Activated naive CD4-positive, alpha-beta T cell treated with anti-CD3 and anti-CD28 coated beads for 36 hours (primary cell): ENCODE measurements at regions of chr14 and their contacts with region 1.

Region 1: GRCh38 chr14:106185837-106186233 is 659.5 kb downstream of the TMEM121 start:
- DNase-seq: peak; percentile 88
- H3K4me3 Mint-ChIP-seq: no peak overlapping the region
- H3K27ac Mint-ChIP-seq: no peak overlapping the region
- H3K4me1 Mint-ChIP-seq: peaks cover 31% of the 10 kb centered on the region
- H3K27me3 Mint-ChIP-seq: no peaks in the 10 kb centered on the region

Region 2: DNA sequence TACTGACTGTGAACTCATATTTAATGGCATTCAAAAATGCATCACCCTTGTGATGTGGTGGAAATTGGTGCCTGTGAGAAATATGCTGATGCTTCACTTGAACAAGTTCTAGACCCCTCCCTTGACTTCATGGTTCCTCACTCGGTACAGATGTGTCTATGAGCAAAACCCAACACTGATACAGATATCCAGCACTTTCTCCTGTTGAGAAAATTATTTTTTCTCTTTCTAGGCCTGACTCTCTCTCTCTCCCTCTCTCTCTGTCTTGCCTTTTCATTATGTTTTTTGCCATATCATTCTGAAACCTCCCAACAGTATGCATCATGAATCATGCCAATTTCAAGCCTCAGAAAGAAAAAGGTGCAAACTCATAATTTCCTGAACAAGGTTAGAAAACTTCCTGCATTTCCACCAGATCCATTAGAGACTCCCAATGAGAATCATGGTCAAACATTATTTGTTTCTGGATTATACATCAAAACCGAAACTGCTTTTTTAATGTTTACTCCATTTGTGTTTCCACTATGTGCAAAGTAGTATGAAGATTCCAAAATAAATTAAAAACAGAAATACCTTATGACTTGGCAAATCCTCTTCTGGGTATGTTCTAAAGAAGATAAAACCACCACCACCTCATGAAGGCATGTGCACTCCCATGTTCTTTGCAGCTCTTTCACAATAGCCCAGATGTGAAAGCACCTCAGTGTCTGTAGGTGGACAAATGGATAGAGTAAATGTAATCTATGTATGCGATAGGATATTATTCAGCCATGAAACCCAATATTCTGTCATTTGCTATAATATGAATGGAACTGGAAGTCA is 115.8 kb before region 1 on chr14:
- CTCF ChIA-PET with region 1: no interaction called
- intact Hi-C with region 1: loop called (anchors 5 kb)
- DNase-seq: peak; percentile 28
- H3K4me3 Mint-ChIP-seq: no peak overlapping the region
- H3K27ac Mint-ChIP-seq: peak overlapping the region; percentile 59
- H3K4me1 Mint-ChIP-seq: peaks cover 18% of the 10 kb centered on the region
- H3K27me3 Mint-ChIP-seq: peaks cover 9% of the 10 kb centered on the region

Region 3: GRCh38 chr14:106115401-106115800 is 70.4 kb before region 1 on chr14:
- CTCF ChIA-PET with region 1: interaction called, 4 read pairs
- intact Hi-C with region 1: loop called (anchors 5 kb)
- DNase-seq: no peak
- H3K4me3 Mint-ChIP-seq: no peak overlapping the region
- H3K27ac Mint-ChIP-seq: peak overlapping the region; percentile 29
- H3K4me1 Mint-ChIP-seq: peaks cover 34% of the 10 kb centered on the region
- H3K27me3 Mint-ChIP-seq: peaks cover 5% of the 10 kb centered on the region

Region 4: GRCh38 chr14:106174206-106174605 is 11.6 kb before region 1 on chr14:
- CTCF ChIA-PET with region 1: interaction called, 27 read pairs
- intact Hi-C with region 1: loop called (anchors 1 kb)
- DNase-seq: peak; percentile 78
- H3K4me3 Mint-ChIP-seq: peak overlapping the region; percentile 25
- H3K27ac Mint-ChIP-seq: no peak overlapping the region
- H3K4me1 Mint-ChIP-seq: peaks cover 54% of the 10 kb centered on the region
- H3K27me3 Mint-ChIP-seq: no peaks in the 10 kb centered on the region

Region 5: GRCh38 chr14:106200541-106201315 is 14.9 kb after region 1 on chr14:
- CTCF ChIA-PET with region 1: interaction called, 20 read pairs
- intact Hi-C with region 1: no loop called
- DNase-seq: peak; percentile 65
- H3K4me3 Mint-ChIP-seq: peak overlapping the region; percentile 71
- H3K27ac Mint-ChIP-seq: no peak overlapping the region
- H3K4me1 Mint-ChIP-seq: peaks cover 19% of the 10 kb centered on the region
- H3K27me3 Mint-ChIP-seq: peaks cover 22% of the 10 kb centered on the region